ENCODE measurements at regions of chr9 and their contacts with region 1.

Region 1: DNA sequence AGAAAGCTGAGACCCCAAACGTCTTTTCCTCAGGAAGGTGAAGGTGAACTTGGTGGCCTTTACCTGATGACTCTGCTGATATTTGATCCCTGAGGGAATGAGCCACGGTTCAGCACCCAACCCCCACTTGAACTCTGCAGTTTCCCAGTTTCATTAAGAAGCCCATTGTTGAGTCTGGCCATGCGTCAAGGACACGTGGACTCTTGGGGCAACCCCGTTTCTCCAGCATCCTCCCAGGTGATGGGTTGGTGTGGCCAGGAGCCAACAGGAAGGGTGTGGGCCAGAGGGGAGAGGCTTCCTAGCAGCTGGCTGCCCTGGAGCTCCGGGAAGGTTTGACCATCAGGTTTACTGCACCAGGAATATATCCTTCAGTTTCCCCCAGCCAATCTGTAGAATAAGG is 59.5 kb upstream of the GNE start:
- DNase-seq: no peak
- ATAC-seq: no peak
- H3K4me3 ChIP-seq: no peak overlapping the region
- H3K4me3 Mint-ChIP-seq: no peak overlapping the region
- H3K27ac ChIP-seq: no peak overlapping the region
- H3K27ac Mint-ChIP-seq: no peak overlapping the region
- H3K4me1 ChIP-seq: no peaks in the 10 kb centered on the region
- H3K4me1 Mint-ChIP-seq: no peaks in the 10 kb centered on the region
- H3K27me3 ChIP-seq: no peaks in the 10 kb centered on the region
- H3K27me3 Mint-ChIP-seq: no peaks in the 10 kb centered on the region
- CTCF ChIP-seq: no peak

Region 2: DNA sequence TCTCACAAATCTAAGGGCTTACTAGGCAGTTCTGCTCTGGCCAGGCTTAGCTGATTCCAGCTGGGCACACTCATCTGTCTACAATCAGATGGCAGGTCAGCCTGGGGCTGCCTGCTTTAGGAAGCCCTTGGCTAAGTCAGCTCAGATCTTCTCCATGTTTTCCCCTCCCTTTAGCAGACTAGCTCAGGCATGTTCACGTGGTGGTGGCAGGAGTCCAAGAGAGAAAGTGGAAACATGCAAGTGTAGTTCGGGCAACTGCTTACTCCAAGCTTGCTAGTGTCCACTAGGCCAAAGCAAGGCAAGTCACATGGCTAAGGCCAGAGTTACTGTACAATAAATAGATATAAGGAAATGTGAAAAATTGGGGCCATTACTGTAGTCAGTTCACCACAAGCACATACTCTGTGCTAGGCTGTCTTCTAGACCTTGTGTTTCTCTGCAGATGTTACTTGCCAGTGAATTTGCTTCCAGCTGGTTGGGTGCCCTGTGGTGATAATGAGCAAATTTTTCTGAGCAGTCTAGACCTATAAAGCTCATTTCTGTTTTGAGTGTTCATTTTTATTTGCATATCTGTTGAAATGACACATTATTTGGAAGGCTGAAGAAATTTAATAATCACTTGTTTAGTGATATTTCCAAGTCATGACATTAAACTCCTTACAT is 242.8 kb before region 1 on chr9:
- CTCF ChIA-PET with region 1: no interaction called
- POLR2A ChIA-PET with region 1: no interaction called
- intact Hi-C with region 1: loop called in 1 of 2 experiments (anchors 10 kb)
- DNase-seq: no peak
- ATAC-seq: no peak
- H3K4me3 ChIP-seq: no peak overlapping the region
- H3K4me3 Mint-ChIP-seq: no peak overlapping the region
- H3K27ac ChIP-seq: no peak overlapping the region
- H3K27ac Mint-ChIP-seq: no peak overlapping the region
- H3K4me1 ChIP-seq: no peaks in the 10 kb centered on the region
- H3K4me1 Mint-ChIP-seq: no peaks in the 10 kb centered on the region
- H3K27me3 ChIP-seq: no peaks in the 10 kb centered on the region
- H3K27me3 Mint-ChIP-seq: no peaks in the 10 kb centered on the region
- CTCF ChIP-seq: no peak

Region 3: GRCh38 chr9:36268007-36268427 is 49.7 kb before region 1 on chr9:
- CTCF ChIA-PET with region 1: no interaction called
- POLR2A ChIA-PET with region 1: no interaction called
- intact Hi-C with region 1: no loop called
- DNase-seq: no peak
- ATAC-seq: no peak
- H3K4me3 ChIP-seq: no peak overlapping the region
- H3K4me3 Mint-ChIP-seq: no peak overlapping the region
- H3K27ac ChIP-seq: no peak overlapping the region
- H3K27ac Mint-ChIP-seq: no peak overlapping the region
- H3K4me1 ChIP-seq: no peaks in the 10 kb centered on the region
- H3K4me1 Mint-ChIP-seq: no peaks in the 10 kb centered on the region
- H3K27me3 ChIP-seq: no peaks in the 10 kb centered on the region
- H3K27me3 Mint-ChIP-seq: no peaks in the 10 kb centered on the region
- CTCF ChIP-seq: no peak

Region 4: DNA sequence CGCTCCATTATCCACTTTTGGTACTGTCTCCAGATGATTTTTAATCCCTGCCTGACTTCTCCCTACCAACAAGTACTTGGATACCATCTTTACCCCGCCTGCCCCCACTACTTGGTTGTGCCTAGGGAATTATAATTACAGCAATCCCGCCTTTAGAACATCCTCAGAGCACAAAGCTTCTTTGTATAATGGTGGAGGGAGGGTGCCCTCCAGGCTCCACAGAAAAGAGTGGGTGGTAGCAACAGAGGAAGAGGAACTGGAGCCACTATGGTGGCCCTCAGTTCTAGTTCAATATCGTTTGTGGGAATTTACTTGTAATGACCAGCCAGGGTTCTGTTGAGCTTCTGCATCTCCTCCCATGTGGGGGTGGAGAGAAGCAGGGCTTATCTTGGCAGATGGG is 161.3 kb after region 1 on chr9:
- CTCF ChIA-PET with region 1: no interaction called
- POLR2A ChIA-PET with region 1: no interaction called
- intact Hi-C with region 1: no loop called
- DNase-seq: no peak
- ATAC-seq: no peak
- H3K4me3 ChIP-seq: no peak overlapping the region
- H3K4me3 Mint-ChIP-seq: no peak overlapping the region
- H3K27ac ChIP-seq: no peak overlapping the region
- H3K27ac Mint-ChIP-seq: no peak overlapping the region
- H3K4me1 ChIP-seq: peaks cover 7% of the 10 kb centered on the region
- H3K4me1 Mint-ChIP-seq: peaks cover 40% of the 10 kb centered on the region
- H3K27me3 ChIP-seq: no peaks in the 10 kb centered on the region
- H3K27me3 Mint-ChIP-seq: no peaks in the 10 kb centered on the region
- CTCF ChIP-seq: no peak